Breast epithelium (tissue), 4 donors: ENCODE measurements at regions of chr3 and their contacts with region 1.

Region 1: DNA sequence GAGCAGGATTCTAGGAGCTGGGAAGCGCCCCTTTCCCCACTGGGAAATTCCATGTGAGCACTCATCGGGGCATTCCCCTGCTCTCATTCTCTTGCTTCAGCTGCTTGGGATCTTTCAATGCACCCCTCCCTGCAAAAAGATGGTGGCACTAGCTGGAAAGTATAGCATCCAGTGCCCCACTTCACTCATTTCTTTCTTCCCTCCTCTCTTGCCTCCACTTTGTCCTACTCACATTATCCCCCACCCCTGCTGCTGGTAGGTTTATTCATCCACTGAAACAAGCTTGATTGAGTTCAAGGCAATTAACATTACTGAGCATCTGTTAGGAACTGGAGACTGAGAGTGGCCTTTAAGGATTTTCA is 84.8 kb upstream of the LIMD1 start:
- DNase-seq: no peak
- H3K4me3 ChIP-seq: no peak overlapping the region
- H3K27ac ChIP-seq: no peak overlapping the region
- H3K4me1 ChIP-seq: no peaks in the 10 kb centered on the region
- H3K27me3 ChIP-seq: no peaks in the 10 kb centered on the region
- CTCF ChIP-seq: no peak
- POLR2A ChIP-seq: no peak

Region 2: DNA sequence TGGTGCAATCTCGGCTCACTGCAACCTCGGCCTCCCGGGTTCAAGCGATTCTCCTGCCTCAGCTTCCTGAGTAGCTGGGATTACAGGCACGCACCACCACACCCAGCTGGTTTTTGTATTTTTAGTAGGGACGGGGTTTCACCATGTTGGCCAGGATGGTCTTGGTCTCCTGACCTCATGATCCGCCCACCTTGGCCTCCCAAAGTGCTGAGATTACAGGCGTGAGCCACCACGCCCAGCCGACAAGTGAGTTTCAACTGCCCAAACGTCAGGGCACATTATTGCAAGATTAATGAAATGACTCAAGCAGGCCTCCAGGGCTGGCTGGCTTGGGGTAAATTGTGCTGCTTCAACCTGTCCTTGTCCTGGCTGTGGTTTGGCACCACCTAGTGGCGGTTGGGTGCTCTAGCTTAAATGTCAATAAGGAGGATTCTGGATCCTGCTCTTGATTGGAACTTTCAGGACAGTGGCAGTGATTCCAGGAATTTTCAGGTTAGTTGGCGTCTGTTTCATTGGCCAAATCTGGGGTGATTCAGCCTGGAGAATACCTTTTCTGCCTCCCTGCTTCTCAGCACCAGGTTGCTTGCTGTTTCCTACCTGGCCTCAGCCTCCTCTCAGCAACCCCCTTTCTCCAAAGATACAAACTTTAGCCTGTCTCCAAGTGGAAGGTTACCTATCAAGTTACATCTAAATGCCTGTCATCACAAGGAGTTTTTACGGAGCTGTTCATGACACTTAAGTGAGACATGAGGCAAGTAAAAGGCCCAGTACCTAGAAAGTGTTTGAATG is 147.0 kb after region 1 on chr3:
- intact Hi-C with region 1: loop called (anchors 2 kb)
- DNase-seq: peak; percentile 83 to 84
- H3K4me3 ChIP-seq: no peak overlapping the region
- H3K27ac ChIP-seq: peak overlapping the region in 1 of 2 donors; percentile 1
- H3K4me1 ChIP-seq: no peaks in the 10 kb centered on the region
- H3K27me3 ChIP-seq: no peaks in the 10 kb centered on the region
- CTCF ChIP-seq: peak; percentile 77 to 97 (median 95)
- POLR2A ChIP-seq: no peak